Cardiac septum (tissue), 1 donor: ENCODE measurements at regions of chr13 and their contacts with region 1.

Region 1: DNA sequence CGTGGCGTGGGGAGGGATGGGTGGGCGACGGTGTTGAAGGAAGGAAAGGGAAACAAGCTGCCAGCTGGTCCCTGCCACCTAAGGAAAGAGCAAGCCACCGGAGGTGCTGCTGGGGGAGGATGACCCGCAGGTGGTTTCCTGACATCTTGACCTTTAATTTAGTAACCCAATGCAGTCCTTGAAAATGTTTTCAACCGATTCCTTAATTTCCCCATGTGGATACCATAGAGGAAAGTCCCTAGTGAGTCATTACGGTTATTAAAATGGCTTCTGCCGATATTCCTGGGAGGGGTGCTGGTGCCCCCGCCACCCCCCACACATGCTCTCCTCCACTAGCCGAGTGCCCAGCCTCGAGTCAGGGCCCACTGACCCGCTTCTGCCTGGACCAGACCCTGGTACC is 6.3 kb upstream of the ANKRD10 start:
- DNase-seq: no peak

Region 2: GRCh38 chr13:111006506-111007031 is 85.4 kb after region 1 on chr13:
- intact Hi-C with region 1: no loop called
- DNase-seq: peak; percentile 90

Region 3: GRCh38 chr13:111031531-111031961 is 110.3 kb after region 1 on chr13:
- intact Hi-C with region 1: loop called (anchors 5 kb)
- DNase-seq: no peak